ENCODE measurements at regions of chr3 and their contacts with region 1.

Region 1: DNA sequence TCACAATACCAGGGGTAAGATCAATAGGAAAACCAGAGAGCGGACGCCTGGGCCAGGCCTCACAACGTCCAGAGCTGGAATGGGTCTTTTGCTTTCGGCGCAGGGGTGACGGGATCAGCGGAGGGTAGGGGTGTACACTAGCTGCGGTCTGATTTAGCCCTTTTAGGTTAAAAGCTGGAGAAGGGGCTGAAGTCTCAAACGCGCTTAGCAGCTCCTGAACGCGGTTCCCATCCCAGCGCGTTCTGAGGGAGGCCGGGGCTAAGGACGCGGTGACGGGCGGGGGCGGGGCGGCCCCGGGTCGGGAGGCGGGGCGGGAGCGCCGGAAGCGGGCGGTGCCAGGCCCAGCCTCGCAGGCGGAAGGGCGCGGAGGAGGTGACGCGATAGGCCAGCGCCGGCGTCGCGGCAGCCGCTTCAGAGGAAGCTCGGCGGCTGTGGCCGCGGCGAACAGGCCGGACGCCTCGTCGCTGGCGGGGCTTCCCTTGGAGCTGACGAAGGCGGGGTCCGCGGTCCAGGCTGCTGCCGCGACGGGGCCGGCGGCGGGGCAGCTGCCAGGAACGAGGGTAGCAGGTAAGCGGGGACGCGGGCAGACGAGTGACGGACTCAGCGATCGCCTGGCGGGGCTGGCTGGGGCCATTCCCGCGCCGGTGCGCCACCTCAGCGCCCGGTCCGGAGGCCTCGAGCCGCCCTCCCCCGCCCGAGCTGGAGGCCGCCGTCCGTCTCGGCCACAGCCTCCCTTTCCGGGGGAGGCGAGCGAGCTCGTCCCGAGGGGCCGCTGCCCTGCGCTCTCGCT is at the start of gene SENP5:
- DNase-seq: peak; percentile 86
- H3K4me3 Mint-ChIP-seq: peak within 1 kb of the TSS; percentile 90
- H3K27ac Mint-ChIP-seq: peak within 1 kb of the TSS; percentile 93
- H3K4me1 Mint-ChIP-seq: no peaks in the 10 kb centered on the region
- H3K27me3 Mint-ChIP-seq: no peaks in the 10 kb centered on the region
- CTCF ChIP-seq: no peak
- total RNA-seq, gene SENP5: 30.2 and 37.0 TPM in 2 replicates

Region 2: GRCh38 chr3:196711838-196712513 is 155.7 kb before region 1 on chr3 and contains the starts of genes CEP19 and PIGX:
- CTCF ChIA-PET with region 1: no interaction called
- POLR2A ChIA-PET with region 1: interaction called, 13 read pairs
- intact Hi-C with region 1: no loop called
- DNase-seq: peak; percentile 79
- H3K4me3 Mint-ChIP-seq: peak within 1 kb of the TSS; percentile 93
- H3K27ac Mint-ChIP-seq: peak within 1 kb of the TSS; percentile 91
- H3K4me1 Mint-ChIP-seq: peaks cover 5% of the 10 kb centered on the region
- H3K27me3 Mint-ChIP-seq: no peaks in the 10 kb centered on the region
- CTCF ChIP-seq: no peak
- total RNA-seq, gene CEP19: 1.8 and 3.2 TPM in 2 replicates
- total RNA-seq, gene PIGX: 20.8 and 23.2 TPM in 2 replicates

Region 3: GRCh38 chr3:196793235-196793641 is 74.5 kb before region 1 on chr3:
- CTCF ChIA-PET with region 1: no interaction called
- POLR2A ChIA-PET with region 1: interaction called, 11 read pairs
- intact Hi-C with region 1: no loop called
- DNase-seq: peak; percentile 91
- H3K4me3 Mint-ChIP-seq: peak overlapping the region; percentile 45
- H3K27ac Mint-ChIP-seq: peak overlapping the region; percentile 71
- H3K4me1 Mint-ChIP-seq: peaks cover 24% of the 10 kb centered on the region
- H3K27me3 Mint-ChIP-seq: no peaks in the 10 kb centered on the region
- CTCF ChIP-seq: no peak

Region 4: DNA sequence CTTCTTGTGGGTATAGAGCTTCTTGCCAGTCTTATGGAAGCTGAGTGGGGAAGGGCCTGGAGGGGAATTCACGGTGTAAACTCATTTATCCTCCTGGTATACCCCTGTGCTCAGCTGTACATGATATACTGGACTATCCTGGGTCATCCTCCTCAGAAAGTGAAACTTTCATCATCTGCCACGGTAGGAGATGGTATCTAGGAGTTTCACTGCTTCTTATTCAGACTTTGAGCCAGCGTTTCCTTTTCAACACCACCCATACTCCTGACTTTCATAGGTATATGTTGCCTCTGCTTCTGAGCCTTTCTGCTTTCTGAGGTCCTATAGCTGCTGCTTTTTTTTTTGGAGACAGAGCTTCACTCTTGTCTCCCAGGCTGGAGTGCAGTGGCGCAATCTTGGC is 15.7 kb after region 1 on chr3:
- CTCF ChIA-PET with region 1: no interaction called
- POLR2A ChIA-PET with region 1: interaction called, 12 read pairs
- intact Hi-C with region 1: no loop called
- DNase-seq: no peak
- H3K4me3 Mint-ChIP-seq: no peak overlapping the region
- H3K27ac Mint-ChIP-seq: no peak overlapping the region
- H3K4me1 Mint-ChIP-seq: no peaks in the 10 kb centered on the region
- H3K27me3 Mint-ChIP-seq: no peaks in the 10 kb centered on the region
- CTCF ChIP-seq: no peak

Measured in MCF 10A (cell line).